ENCODE measurements at regions of chr1 and their contacts with region 1.

Region 1: DNA sequence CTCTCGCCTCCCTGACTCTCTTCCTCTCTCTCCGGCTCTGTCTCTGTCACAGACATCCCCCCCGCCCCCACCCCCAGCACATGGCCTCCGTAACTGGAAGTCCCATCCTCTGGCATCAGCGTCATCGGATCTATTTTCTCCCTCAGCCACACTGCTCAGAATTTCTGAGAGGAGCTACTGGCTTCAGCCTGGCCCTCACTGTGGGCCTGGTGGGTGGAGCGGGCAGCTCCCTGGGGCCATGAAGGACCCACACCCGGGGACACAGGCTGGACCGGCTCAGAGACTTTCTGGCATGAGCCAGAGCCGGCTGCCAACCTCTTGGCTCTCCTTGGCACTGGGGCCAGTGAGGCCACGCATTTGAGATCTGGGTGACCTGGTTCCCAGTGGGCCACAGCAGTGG is 61.2 kb upstream of the CASZ1 start:
- DNase-seq: no peak
- ATAC-seq: no peak
- H3K4me3 Mint-ChIP-seq: no peak overlapping the region
- H3K27ac Mint-ChIP-seq: no peak overlapping the region
- H3K4me1 Mint-ChIP-seq: no peaks in the 10 kb centered on the region
- H3K27me3 Mint-ChIP-seq: peaks cover 4% of the 10 kb centered on the region

Region 2: DNA sequence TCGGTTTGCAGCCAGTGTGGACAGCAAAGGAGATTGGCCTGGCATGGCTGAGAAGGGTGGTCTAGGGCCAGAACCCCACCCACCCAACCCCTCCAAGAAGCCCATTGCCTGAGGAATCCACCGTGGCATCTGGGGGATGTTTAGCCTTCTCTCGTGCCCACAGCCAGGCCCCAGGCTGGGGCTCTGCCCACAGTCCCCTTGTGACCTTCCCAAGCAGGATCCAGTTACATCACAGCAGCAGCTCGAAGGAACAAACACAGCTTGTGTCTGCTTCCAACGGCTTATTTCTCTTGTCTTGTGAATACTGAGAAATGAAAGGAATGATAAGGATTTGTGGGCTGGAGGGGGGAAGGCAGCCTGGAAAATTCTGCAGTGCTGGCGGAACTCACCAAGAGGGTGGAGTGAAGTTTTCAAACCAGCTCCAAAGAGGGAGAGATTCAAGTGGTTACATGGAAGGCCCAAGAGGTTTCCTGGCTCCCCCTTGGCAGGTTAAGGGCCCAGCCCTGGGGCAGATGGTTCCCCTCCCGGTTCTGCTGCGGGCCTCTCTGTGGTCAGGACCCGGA is 1698.8 kb after region 1 on chr1:
- CTCF ChIA-PET with region 1: no interaction called
- POLR2A ChIA-PET with region 1: interaction called, 16 read pairs
- intact Hi-C with region 1: no loop called
- DNase-seq: no peak
- ATAC-seq: no peak
- H3K4me3 Mint-ChIP-seq: no peak overlapping the region
- H3K27ac Mint-ChIP-seq: no peak overlapping the region
- H3K4me1 Mint-ChIP-seq: no peaks in the 10 kb centered on the region
- H3K27me3 Mint-ChIP-seq: no peaks in the 10 kb centered on the region